Activated CD8-positive, alpha-beta T cell treated with anti-CD3 and anti-CD28 coated beads for 36 hours (primary cell): ENCODE measurements at regions of chr14 and their contacts with region 1.

Region 1: GRCh38 chr14:22994762-22995275 is 12.5 kb upstream of the AJUBA start:
- DNase-seq: peak; percentile 57
- ATAC-seq: peak; percentile 94
- H3K4me3 Mint-ChIP-seq: no peak overlapping the region
- H3K27ac Mint-ChIP-seq: no peak overlapping the region
- H3K4me1 Mint-ChIP-seq: peaks cover 3% of the 10 kb centered on the region
- H3K27me3 Mint-ChIP-seq: no peaks in the 10 kb centered on the region
- CTCF ChIP-seq: peak; percentile 59

Region 2: GRCh38 chr14:22766456-22767322 is 228.1 kb before region 1 on chr14 and contains the start of gene OXA1L:
- CTCF ChIA-PET with region 1: no interaction called
- POLR2A ChIA-PET with region 1: no interaction called
- intact Hi-C with region 1: no loop called
- DNase-seq: peak; percentile 97
- ATAC-seq: peak; percentile 90
- H3K4me3 Mint-ChIP-seq: peak within 1 kb of the TSS; percentile 85
- H3K27ac Mint-ChIP-seq: peak within 1 kb of the TSS; percentile 98
- H3K4me1 Mint-ChIP-seq: peaks cover 26% of the 10 kb centered on the region
- H3K27me3 Mint-ChIP-seq: no peaks in the 10 kb centered on the region
- CTCF ChIP-seq: no peak
- total RNA-seq, gene OXA1L: 134 to 140 TPM

Region 3: GRCh38 chr14:22802860-22803686 is 191.7 kb before region 1 on chr14:
- CTCF ChIA-PET with region 1: no interaction called
- POLR2A ChIA-PET with region 1: no interaction called
- intact Hi-C with region 1: no loop called
- DNase-seq: no peak
- ATAC-seq: no peak
- H3K4me3 Mint-ChIP-seq: no peak overlapping the region
- H3K27ac Mint-ChIP-seq: no peak overlapping the region
- H3K4me1 Mint-ChIP-seq: no peaks in the 10 kb centered on the region
- H3K27me3 Mint-ChIP-seq: peaks cover 29% of the 10 kb centered on the region
- CTCF ChIP-seq: no peak

Region 4: GRCh38 chr14:22908601-22909000 is 86.2 kb before region 1 on chr14:
- CTCF ChIA-PET with region 1: no interaction called
- POLR2A ChIA-PET with region 1: no interaction called
- intact Hi-C with region 1: no loop called
- DNase-seq: no peak
- ATAC-seq: no peak
- H3K4me3 Mint-ChIP-seq: no peak overlapping the region
- H3K27ac Mint-ChIP-seq: no peak overlapping the region
- H3K4me1 Mint-ChIP-seq: peaks cover 20% of the 10 kb centered on the region
- H3K27me3 Mint-ChIP-seq: no peaks in the 10 kb centered on the region
- CTCF ChIP-seq: no peak

Region 5: DNA sequence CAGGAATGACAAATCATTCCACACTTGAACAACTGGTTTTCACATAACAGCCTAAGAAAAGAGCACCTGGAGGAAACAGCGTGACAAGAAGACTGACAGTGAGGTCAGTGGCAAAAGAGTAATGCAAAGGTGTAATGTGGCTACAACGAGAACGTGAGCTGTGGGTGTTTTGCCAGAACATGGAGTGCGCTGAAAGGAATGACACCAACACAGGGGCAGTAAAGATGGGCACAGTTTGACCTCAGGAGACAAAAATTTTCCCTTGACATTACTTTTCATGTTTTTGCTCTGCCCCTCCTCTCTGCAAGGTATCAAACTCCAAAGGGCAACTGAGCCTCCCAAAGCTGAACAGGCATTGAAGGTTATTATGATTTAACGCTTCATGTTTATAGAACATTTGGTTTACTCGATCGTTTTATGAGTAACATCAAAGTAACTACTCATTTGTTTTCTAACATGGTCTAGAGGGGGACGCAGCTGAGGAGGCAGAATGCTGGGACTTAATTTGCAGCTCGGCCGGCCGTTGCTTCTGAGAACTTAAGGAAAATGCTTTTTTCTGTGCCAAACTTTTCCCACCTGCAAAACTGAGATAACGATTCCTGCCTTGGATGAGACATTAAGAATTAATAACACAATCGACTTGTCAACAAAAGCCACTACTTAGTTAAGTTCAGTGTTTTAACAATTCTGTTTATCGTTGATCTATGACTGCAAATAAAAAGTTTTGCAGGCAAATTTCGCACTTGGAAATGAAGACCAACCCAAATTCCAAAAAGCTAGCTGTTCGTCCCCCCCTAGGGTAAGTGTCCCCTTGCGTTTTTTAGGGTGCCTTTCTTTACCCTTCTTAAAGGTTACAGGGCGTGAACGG is 38.9 kb before region 1 on chr14:
- CTCF ChIA-PET with region 1: interaction called, 13 read pairs
- POLR2A ChIA-PET with region 1: no interaction called
- intact Hi-C with region 1: no loop called
- DNase-seq: no peak
- ATAC-seq: no peak
- H3K4me3 Mint-ChIP-seq: peak overlapping the region; percentile 93
- H3K27ac Mint-ChIP-seq: peak overlapping the region; percentile 93
- H3K4me1 Mint-ChIP-seq: peaks cover 25% of the 10 kb centered on the region
- H3K27me3 Mint-ChIP-seq: no peaks in the 10 kb centered on the region
- CTCF ChIP-seq: no peak

Region 6: DNA sequence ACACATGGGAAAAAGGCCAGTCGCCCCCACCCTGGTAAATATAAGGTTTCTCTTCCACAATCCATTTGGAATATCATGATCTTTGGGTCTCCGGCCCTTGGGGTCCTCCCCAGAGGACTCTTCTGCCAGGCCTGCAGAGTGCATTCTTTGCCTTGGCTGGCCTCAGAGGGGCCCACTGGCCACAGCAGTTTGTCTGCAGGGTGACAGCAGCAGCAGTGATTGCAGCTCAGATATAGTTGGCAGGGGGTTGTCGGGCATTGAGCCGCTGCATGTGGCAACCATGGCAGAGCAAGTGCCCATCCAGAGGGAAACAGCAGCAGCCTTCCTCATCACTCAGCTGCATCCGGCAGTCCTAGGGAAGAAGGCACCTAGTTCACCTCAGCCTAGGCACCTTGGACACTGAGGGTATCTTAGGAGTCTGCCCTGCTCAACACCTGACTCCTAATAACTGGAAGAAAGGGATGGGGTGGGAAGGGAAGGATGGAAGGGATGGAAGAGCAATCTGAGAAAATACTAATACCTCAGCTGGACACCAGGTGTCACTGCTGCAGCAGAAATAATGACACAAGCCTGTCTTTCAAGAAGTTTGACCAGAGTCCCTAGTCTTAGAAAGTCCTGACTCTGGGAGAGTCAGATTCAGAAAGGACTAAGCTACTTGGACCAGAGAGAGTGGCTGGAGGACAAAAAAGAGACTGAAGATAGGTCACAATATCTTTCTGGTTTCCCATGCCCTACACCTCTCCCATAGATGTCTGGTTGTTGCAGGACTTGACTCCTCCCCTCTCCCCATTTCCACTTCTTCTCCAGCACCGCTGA is 21.4 kb before region 1 on chr14:
- CTCF ChIA-PET with region 1: interaction called, 58 read pairs
- POLR2A ChIA-PET with region 1: no interaction called
- intact Hi-C with region 1: no loop called
- DNase-seq: peak; percentile 56
- ATAC-seq: peak; percentile 69
- H3K4me3 Mint-ChIP-seq: no peak overlapping the region
- H3K27ac Mint-ChIP-seq: no peak overlapping the region
- H3K4me1 Mint-ChIP-seq: no peaks in the 10 kb centered on the region
- H3K27me3 Mint-ChIP-seq: no peaks in the 10 kb centered on the region
- CTCF ChIP-seq: peak; percentile 80

Region 7: GRCh38 chr14:23013054-23013748 is 18.4 kb after region 1 on chr14:
- CTCF ChIA-PET with region 1: interaction called, 65 read pairs
- POLR2A ChIA-PET with region 1: interaction called, 6 read pairs
- intact Hi-C with region 1: no loop called
- DNase-seq: no peak
- ATAC-seq: no peak
- H3K4me3 Mint-ChIP-seq: no peak overlapping the region
- H3K27ac Mint-ChIP-seq: no peak overlapping the region
- H3K4me1 Mint-ChIP-seq: peaks cover 18% of the 10 kb centered on the region
- H3K27me3 Mint-ChIP-seq: no peaks in the 10 kb centered on the region
- CTCF ChIP-seq: no peak

Region 8: GRCh38 chr14:23034483-23035302 is 39.9 kb after region 1 on chr14 and contains the start of gene PSMB5:
- CTCF ChIA-PET with region 1: interaction called, 12 read pairs
- POLR2A ChIA-PET with region 1: interaction called, 5 read pairs
- intact Hi-C with region 1: no loop called
- DNase-seq: peak; percentile 96
- ATAC-seq: peak; percentile 96
- H3K4me3 Mint-ChIP-seq: peak within 1 kb of the TSS; percentile 92
- H3K27ac Mint-ChIP-seq: peak within 1 kb of the TSS; percentile 98
- H3K4me1 Mint-ChIP-seq: peaks cover 31% of the 10 kb centered on the region
- H3K27me3 Mint-ChIP-seq: no peaks in the 10 kb centered on the region
- CTCF ChIP-seq: no peak
- total RNA-seq, gene PSMB5: 119 to 120 TPM

Region 9: DNA sequence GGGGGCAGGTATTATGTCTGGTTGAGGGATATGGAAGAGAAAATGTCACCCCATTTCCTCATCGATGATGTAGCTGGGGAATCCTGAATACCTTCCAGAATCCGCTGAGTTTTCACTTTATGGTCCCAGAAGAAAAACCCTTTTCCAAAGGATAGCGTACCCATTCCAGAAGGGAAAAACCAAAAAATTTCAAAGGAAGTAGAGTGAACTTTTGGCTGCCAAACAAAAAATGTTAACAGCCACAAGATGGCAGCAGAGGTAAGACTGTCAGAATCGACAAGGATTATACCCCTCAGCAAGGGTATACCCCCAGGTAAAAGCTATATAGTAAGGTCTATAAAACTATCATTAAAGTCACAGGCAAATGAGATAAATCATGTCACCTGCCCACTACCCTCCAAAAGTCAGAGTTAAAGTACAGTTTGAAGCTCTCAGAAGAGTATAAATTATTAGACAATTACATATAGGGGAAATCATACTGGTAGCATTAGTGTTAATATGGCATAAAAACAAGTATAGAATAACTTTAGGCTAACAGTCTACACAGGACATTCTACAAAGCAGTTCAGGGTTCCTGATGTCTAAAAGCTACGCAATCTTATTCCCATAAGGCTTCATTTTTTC is 82.1 kb after region 1 on chr14:
- CTCF ChIA-PET with region 1: interaction called, 12 read pairs
- POLR2A ChIA-PET with region 1: no interaction called
- intact Hi-C with region 1: no loop called
- DNase-seq: peak; percentile 39
- ATAC-seq: peak; percentile 70
- H3K4me3 Mint-ChIP-seq: no peak overlapping the region
- H3K27ac Mint-ChIP-seq: no peak overlapping the region
- H3K4me1 Mint-ChIP-seq: peaks cover 9% of the 10 kb centered on the region
- H3K27me3 Mint-ChIP-seq: no peaks in the 10 kb centered on the region
- CTCF ChIP-seq: peak; percentile 70

Region 10: GRCh38 chr14:23195550-23196101 is 200.8 kb after region 1 on chr14:
- CTCF ChIA-PET with region 1: no interaction called
- POLR2A ChIA-PET with region 1: no interaction called
- intact Hi-C with region 1: no loop called
- DNase-seq: no peak
- ATAC-seq: no peak
- H3K4me3 Mint-ChIP-seq: no peak overlapping the region
- H3K27ac Mint-ChIP-seq: no peak overlapping the region
- H3K4me1 Mint-ChIP-seq: no peaks in the 10 kb centered on the region
- H3K27me3 Mint-ChIP-seq: peaks cover 1% of the 10 kb centered on the region
- CTCF ChIP-seq: no peak